Posterior cingulate gyrus (tissue), 11 donors: ENCODE measurements at regions of chr3 and their contacts with region 1.

Region 1: GRCh38 chr3:65785065-65785645 is 253.6 kb downstream of the MAGI1 start:
- DNase-seq: no peak

Region 2: DNA sequence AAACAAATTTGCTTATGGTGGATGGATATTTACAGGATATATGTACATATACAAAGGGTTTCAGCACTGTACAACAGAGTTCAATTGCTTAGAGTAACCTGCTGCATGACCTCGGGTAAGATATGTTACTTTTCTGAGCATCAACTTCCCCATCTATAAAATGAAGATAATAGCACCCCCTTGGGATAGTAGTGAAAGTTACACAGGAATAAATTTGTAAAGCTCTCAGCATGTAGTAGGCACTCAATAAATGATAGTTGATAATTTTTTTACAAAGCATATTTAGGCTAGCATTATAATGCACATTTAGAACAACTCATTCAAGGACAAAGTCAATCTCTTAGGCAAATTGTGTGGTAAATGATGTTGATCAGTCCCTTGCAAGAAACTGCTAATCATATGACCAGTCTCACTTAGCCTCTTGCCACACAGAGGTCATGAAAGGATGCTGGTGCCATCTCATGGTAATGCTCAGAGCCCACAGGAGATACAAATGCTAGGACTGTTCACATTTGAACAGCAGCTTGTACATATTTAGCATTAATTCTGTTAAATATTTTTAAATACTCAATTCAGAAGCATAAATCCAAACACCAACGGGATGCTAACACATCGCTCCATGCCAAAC is 129.7 kb after region 1 on chr3:
- intact Hi-C with region 1: loop called (anchors 2 kb)
- DNase-seq: no peak

Region 3: DNA sequence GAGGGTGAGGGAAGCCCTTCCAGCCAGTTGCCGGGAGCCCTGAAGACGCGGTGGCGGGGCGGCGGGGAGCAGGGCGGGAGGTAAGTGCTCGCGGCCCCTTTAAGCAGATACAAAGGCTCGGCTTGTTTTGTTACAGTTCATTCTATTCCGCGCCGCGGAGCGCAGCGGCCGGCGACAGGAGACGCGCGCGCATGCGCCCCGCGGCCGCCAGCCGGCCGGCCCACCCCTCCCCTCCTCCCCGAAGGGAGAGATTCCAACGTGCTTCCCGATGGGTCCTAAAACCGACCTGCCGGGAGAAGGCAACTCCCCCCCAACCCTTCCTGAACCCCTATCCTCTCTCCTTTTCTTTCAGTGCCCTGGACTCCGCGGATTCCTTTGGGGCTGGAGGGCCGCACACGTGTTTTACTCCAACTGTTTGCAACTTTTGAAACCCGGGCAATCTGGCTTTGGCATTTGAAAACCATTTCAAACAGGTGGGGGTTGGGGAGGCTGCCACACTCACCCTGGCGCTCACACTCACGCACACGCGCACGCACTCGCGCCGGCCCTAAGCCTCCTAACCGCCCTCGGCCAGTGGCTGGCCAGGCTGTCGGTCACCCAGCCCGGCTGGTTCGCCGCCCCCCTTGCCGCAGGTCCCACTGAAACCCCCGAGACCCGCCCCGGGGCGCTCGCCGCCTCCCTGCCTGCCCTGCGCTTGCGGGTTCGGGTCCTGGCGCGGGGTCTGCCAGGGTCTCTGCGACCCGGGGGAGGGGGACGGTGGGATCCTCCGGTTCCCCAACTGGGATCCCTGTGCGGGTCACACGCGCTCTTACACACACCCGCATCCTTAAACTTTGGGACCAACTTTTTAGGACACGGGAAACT is 253.8 kb after region 1 on chr3 and contains the start of gene MAGI1:
- intact Hi-C with region 1: loop called (anchors 5 kb)
- DNase-seq: peak; percentile 78 to 98 (median 86)

Region 4: DNA sequence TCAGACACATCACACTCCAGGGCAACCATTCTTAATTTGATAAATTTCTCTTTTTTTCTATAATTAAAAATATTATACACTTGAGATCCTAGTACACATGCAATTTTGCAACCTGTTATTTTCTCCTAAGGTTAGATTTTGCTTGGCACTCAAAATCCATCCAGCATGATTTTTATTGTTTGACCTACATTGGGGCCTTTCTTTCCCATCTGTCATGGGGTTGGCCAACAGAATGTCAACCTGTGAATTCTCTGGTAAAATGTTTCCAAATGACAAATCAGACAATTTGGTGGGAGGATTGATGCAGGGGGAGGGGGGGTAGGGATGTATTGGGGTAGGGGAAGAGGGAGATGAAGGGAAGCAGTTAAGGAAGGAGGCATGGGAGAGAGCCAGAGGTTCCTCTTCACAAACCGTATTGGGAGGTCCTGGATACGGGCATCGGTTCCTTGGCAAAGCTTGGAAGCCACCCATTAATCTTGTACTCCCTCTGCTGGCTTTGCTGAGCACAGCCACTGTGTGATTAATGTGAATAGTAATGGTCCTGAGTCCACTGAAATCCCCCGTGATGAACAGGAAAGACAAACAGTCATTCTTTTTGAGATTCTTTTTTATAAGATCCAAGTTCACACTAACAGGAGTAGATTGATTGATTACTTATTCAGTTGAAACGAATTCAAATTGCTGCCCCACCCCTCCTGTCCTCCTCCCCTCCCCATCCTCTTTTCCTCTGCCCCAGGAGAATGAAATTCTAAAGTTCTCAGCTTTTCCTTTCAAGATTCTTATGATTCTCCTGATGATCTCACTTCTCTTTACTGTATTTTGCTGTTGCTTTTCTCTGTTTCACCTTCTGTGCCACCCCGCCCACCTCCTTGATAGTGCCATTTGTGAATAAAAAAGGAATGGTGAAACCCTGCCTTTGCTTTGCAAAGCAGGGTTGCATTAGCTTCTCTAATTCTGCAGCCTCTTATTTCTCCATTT is 353.5 kb after region 1 on chr3:
- intact Hi-C with region 1: loop called (anchors 1 kb)
- DNase-seq: peak in 5 of 10 donors; percentile 28 to 46 (median 39)

Region 5: GRCh38 chr3:66195347-66195783 is 410.2 kb after region 1 on chr3:
- intact Hi-C with region 1: loop called (anchors 5 kb)
- DNase-seq: peak; percentile 57 to 96 (median 83)